Activated CD8-positive, alpha-beta memory T cell treated with anti-CD3 and anti-CD28 coated beads, Interleukin-2, amount 10 ng/mL, durations not matched to agents 7 days and 5 days (primary cell): ENCODE measurements at regions of chr4 and their contacts with region 1.

Region 1: DNA sequence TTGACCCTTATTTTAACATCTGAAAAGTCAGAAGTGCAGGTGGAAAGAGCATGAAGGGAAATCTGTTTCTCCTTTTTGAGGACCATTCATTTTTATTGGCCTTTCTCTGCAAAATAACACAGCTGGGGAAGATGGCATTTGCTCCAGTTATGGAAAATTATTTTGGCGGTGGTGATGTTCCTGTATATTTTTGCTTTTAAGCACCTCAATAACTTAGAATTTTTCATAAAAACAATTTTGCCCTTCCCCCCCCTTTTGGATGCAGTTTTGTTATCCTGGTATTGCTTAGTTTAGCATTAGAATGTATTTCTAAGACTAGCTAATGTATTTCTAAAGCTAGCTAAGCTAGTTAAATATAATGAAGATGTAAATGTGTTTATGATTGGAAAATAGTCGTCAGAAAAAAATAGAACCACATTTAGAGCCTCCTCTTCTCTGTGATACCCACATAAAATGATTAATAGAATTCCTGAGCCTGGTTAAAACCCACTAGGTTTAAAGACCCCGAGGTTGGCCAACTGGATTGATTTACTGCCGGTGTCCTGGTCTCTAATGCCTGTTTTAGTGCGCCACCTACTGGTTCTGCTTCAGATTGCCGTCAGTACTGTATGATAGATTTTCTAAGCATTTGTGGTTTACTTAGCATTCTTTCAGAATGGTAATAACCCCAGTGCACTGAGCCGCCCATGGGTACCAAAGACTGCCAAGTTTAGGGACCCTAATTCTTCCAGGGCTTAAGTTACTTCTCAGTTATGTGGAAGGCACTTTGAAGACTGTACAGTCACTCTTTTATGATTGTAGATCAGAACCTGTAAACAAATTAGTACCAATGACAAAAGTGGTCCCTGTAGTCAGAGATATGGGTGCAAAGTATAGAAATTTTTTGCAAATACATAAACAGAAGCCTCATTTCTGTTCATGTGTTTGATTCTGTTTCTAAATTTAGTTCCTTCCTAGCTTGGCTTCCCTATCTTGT is 11.4 kb downstream of the KLF3 start:
- DNase-seq: peak; percentile 86
- ATAC-seq: peak; percentile 81
- H3K4me3 Mint-ChIP-seq: no peak overlapping the region
- H3K27ac Mint-ChIP-seq: no peak overlapping the region
- H3K4me1 Mint-ChIP-seq: peaks cover 31% of the 10 kb centered on the region
- H3K27me3 Mint-ChIP-seq: no peaks in the 10 kb centered on the region

Region 2: GRCh38 chr4:38612646-38613414 is 62.6 kb before region 1 on chr4:
- CTCF ChIA-PET with region 1: no interaction called
- DNase-seq: no peak
- ATAC-seq: no peak
- H3K4me3 Mint-ChIP-seq: no peak overlapping the region
- H3K27ac Mint-ChIP-seq: no peak overlapping the region
- H3K4me1 Mint-ChIP-seq: peaks cover 10% of the 10 kb centered on the region
- H3K27me3 Mint-ChIP-seq: peaks cover 5% of the 10 kb centered on the region

Region 3: GRCh38 chr4:38625508-38625907 is 49.9 kb before region 1 on chr4:
- CTCF ChIA-PET with region 1: no interaction called
- DNase-seq: no peak
- ATAC-seq: no peak
- H3K4me3 Mint-ChIP-seq: no peak overlapping the region
- H3K27ac Mint-ChIP-seq: no peak overlapping the region
- H3K4me1 Mint-ChIP-seq: peaks cover 7% of the 10 kb centered on the region
- H3K27me3 Mint-ChIP-seq: no peaks in the 10 kb centered on the region

Region 4: DNA sequence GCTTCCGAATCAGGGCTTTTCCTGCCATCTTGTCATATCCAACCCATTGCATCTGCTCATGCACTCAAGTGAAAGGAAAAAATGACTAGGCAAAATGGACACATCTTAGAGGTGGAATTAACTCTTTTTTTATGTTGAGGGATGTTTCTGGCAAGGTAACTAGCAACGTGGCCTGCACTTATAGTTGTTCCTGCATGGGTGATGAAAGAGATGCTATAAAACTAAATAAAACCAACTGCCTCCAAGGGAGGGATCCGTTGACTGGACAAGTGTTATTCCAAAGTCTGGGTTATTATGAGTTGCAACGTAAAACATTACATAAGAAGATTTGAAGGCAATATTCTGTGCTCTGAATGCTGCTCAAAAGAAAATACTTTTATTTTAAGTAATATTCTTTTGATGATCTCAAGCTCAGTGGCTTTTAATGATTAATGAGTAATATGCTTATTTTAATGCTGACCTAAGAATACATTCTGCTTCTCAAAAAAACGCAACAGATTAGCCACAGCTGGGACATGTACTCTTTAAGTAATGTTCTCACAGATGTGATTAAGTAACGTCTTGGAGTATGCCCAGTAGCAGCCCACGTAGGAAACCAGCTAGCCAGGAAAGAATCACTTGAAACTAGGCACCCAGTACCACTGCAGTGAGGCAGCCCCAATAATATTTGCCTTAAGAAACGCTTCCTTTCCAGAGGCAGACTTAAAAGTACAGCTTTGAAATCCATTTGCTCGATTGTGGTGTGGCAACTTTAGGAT is 16.0 kb after region 1 on chr4:
- CTCF ChIA-PET with region 1: interaction called, 13 read pairs
- DNase-seq: no peak
- ATAC-seq: no peak
- H3K4me3 Mint-ChIP-seq: no peak overlapping the region
- H3K27ac Mint-ChIP-seq: no peak overlapping the region
- H3K4me1 Mint-ChIP-seq: peaks cover 10% of the 10 kb centered on the region
- H3K27me3 Mint-ChIP-seq: no peaks in the 10 kb centered on the region